Posterior cingulate gyrus (tissue), 11 donors: ENCODE measurements at regions of chr3 and their contacts with region 1.

Region 1: DNA sequence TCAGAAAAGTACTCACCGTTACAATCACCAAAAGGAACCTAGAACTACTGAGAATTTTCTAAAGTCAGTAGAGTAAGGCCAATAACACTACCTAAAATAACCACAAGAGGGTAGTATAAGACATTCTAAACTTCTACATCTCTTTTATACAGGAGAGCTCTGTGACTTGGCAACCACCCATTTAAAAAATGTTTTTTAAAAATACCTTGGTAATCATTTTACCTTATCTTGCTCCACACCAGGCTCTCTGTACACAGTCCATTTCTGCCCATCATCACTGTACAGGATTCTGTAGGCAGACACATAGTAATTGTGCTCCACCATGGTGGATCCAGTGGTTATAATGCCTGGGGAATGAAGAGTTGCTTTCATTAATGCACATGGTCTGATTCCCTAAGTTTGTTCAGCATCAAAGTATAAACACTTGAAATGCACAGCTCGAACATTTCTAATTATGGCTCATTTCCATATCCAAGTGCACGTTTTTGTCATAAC is 54.5 kb downstream of the ST3GAL6 start:
- DNase-seq: no peak

Region 2: GRCh38 chr3:98893740-98894139 is 76.1 kb after region 1 on chr3:
- intact Hi-C with region 1: no loop called
- DNase-seq: no peak

Region 3: GRCh38 chr3:98994128-98994762 is 176.7 kb after region 1 on chr3:
- intact Hi-C with region 1: loop called (anchors 1 kb)
- DNase-seq: no peak